ENCODE measurements at regions of chr13 and their contacts with region 1.

Region 1: DNA sequence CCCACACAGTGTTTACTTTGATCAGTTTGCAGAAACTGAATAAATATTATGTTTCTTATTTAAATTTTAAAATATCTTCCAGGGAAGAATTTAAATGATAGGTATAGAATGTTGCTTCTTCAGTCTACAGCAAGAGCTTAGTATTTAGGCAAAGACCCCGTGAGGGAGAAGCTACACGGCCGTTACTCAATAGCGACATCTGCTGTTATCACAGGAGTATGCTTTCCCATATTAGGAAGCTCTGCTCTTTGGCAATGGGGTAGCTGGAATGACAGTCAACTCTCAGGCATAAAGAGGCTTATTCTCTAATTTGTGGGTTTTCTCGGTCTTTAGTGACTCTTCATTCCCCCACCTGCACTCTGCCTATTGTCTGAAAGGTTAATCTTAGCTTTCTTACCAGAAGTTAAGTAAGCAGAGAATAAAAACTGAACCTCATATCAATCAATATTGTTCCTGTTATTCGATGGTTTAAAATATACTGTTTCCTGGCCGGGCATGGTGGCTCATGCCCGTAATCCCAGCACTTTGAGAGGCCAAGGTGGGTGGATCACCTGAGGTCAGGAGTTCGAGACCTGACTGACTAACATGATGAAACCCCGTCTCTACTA is 13.2 kb upstream of the LHFPL6 start:
- DNase-seq: peak; percentile 59 to 70
- H3K4me3 ChIP-seq: no peak overlapping the region
- H3K4me3 Mint-ChIP-seq: no peak overlapping the region
- H3K27ac Mint-ChIP-seq: no peak overlapping the region
- H3K4me1 ChIP-seq: no peaks in the 10 kb centered on the region
- H3K4me1 Mint-ChIP-seq: no peaks in the 10 kb centered on the region
- H3K27me3 ChIP-seq: no peaks in the 10 kb centered on the region
- H3K27me3 Mint-ChIP-seq: peaks cover 3% of the 10 kb centered on the region
- CTCF ChIP-seq: peak; percentile 94

Region 2: DNA sequence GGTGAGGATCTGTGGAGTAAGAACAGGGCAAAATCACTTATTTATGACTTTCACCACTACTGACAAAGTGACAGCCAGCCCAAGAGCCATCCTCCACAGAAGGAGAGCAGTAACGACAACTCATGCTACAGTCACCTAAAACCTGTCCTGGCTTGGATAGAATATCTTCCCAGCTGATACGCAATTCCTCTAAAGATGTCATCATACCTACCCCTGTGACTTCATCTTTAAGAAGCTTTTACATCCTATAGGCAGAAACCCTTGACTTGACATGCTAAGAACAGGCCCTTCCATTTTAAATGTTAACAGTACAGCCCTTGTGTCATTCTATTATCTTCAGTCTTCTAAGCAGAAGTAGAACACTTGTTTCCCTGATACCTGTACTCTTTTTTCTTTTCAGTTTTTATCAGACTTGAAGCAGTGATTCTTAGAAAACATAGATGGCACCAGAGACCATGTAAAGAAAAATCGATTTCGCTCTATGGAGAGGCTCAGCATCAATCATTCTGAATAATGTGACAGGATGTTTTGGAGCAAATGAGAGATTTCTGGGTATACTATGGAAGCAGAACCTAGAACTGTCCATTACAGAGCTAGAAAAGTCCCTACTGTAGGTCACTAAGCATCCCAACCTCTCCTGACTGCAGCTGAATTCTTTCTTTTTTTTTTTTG is 645.7 kb before region 1 on chr13:
- CTCF ChIA-PET with region 1: interaction called, 3 read pairs
- POLR2A ChIA-PET with region 1: no interaction called
- intact Hi-C with region 1: loop called (anchors 1 kb)
- DNase-seq: peak in 1 of 2 experiments; percentile 18
- H3K4me3 ChIP-seq: no peak overlapping the region
- H3K4me3 Mint-ChIP-seq: no peak overlapping the region
- H3K27ac Mint-ChIP-seq: peak overlapping the region; percentile 48
- H3K4me1 ChIP-seq: no peaks in the 10 kb centered on the region
- H3K4me1 Mint-ChIP-seq: peaks cover 12% of the 10 kb centered on the region
- H3K27me3 ChIP-seq: no peaks in the 10 kb centered on the region
- H3K27me3 Mint-ChIP-seq: no peaks in the 10 kb centered on the region
- CTCF ChIP-seq: peak; percentile 4 to 15

Region 3: DNA sequence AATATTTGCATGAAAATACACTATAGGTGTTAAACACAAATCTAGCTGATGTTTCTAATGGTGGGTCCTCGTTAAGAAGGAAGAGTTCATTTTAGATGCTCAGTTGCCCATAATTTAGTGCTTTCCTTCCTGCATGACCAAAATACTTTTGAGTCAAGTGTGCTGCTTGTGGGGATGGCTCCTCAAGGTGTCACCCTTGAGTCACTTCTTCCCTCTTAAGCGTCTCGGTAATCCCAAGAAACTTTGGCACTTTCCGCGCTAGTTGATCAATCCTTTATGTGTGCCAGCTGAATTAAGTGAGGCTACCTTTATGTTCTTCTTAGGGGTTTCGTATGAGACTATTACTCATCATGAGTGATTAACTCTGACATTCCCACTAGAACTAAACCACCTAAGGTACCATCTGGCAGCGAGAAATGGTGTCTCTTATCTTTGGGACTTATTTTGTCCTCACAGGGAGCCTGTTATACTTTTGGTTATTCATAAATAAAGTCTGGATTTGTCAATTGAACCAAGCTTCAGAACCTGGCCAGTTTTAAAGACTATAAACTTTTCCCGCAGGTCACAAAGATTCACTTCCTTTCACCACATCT is 471.2 kb before region 1 on chr13:
- CTCF ChIA-PET with region 1: interaction called, 7 read pairs
- POLR2A ChIA-PET with region 1: no interaction called
- intact Hi-C with region 1: loop called (anchors 1 kb)
- DNase-seq: peak; percentile 47 to 52
- H3K4me3 ChIP-seq: no peak overlapping the region
- H3K4me3 Mint-ChIP-seq: no peak overlapping the region
- H3K27ac Mint-ChIP-seq: no peak overlapping the region
- H3K4me1 ChIP-seq: no peaks in the 10 kb centered on the region
- H3K4me1 Mint-ChIP-seq: no peaks in the 10 kb centered on the region
- H3K27me3 ChIP-seq: no peaks in the 10 kb centered on the region
- H3K27me3 Mint-ChIP-seq: peaks cover 17% of the 10 kb centered on the region
- CTCF ChIP-seq: peak; percentile 73 to 84

Region 4: GRCh38 chr13:39415008-39415802 is 201.0 kb before region 1 on chr13:
- CTCF ChIA-PET with region 1: interaction called, 13 read pairs
- POLR2A ChIA-PET with region 1: no interaction called
- intact Hi-C with region 1: loop called (anchors 1 kb)
- DNase-seq: peak; percentile 39 to 52
- H3K4me3 ChIP-seq: no peak overlapping the region
- H3K4me3 Mint-ChIP-seq: no peak overlapping the region
- H3K27ac Mint-ChIP-seq: no peak overlapping the region
- H3K4me1 ChIP-seq: no peaks in the 10 kb centered on the region; the same call in 1 of the 2 replicates
- H3K4me1 Mint-ChIP-seq: peaks cover 7% of the 10 kb centered on the region
- H3K27me3 ChIP-seq: no peaks in the 10 kb centered on the region
- H3K27me3 Mint-ChIP-seq: peaks cover 9% of the 10 kb centered on the region
- CTCF ChIP-seq: peak; percentile 54 to 68

Region 5: GRCh38 chr13:39461685-39462266 is 154.4 kb before region 1 on chr13:
- CTCF ChIA-PET with region 1: no interaction called
- POLR2A ChIA-PET with region 1: no interaction called
- intact Hi-C with region 1: no loop called
- DNase-seq: peak in 1 of 2 experiments; percentile 7
- H3K4me3 ChIP-seq: no peak overlapping the region
- H3K4me3 Mint-ChIP-seq: peak overlapping the region; percentile 35
- H3K27ac Mint-ChIP-seq: peak overlapping the region; percentile 27
- H3K4me1 ChIP-seq: peaks cover 12% of the 10 kb centered on the region
- H3K4me1 Mint-ChIP-seq: peaks cover 15% of the 10 kb centered on the region
- H3K27me3 ChIP-seq: no peaks in the 10 kb centered on the region
- H3K27me3 Mint-ChIP-seq: peaks cover 13% of the 10 kb centered on the region
- CTCF ChIP-seq: no peak

Region 6: GRCh38 chr13:39676315-39676876 is 60.2 kb after region 1 on chr13:
- CTCF ChIA-PET with region 1: no interaction called
- POLR2A ChIA-PET with region 1: no interaction called
- intact Hi-C with region 1: loop called (anchors 1 kb)
- DNase-seq: peak in 1 of 2 experiments; percentile 29
- H3K4me3 ChIP-seq: no peak overlapping the region
- H3K4me3 Mint-ChIP-seq: no peak overlapping the region
- H3K27ac Mint-ChIP-seq: no peak overlapping the region
- H3K4me1 ChIP-seq: peaks cover 14% of the 10 kb centered on the region; the same call in 1 of the 2 replicates
- H3K4me1 Mint-ChIP-seq: peaks cover 8% of the 10 kb centered on the region
- H3K27me3 ChIP-seq: no peaks in the 10 kb centered on the region
- H3K27me3 Mint-ChIP-seq: no peaks in the 10 kb centered on the region
- CTCF ChIP-seq: peak; percentile 38 to 44